ENCODE measurements at regions of chr22 and their contacts with region 1.

Region 1: GRCh38 chr22:32144496-32145274 is 14.4 kb downstream of the C22orf42 start:
- DNase-seq: peak; percentile 37
- H3K4me3 Mint-ChIP-seq: no peak overlapping the region
- H3K27ac Mint-ChIP-seq: no peak overlapping the region
- H3K4me1 Mint-ChIP-seq: peaks cover 37% of the 10 kb centered on the region
- H3K27me3 Mint-ChIP-seq: no peaks in the 10 kb centered on the region

Region 2: DNA sequence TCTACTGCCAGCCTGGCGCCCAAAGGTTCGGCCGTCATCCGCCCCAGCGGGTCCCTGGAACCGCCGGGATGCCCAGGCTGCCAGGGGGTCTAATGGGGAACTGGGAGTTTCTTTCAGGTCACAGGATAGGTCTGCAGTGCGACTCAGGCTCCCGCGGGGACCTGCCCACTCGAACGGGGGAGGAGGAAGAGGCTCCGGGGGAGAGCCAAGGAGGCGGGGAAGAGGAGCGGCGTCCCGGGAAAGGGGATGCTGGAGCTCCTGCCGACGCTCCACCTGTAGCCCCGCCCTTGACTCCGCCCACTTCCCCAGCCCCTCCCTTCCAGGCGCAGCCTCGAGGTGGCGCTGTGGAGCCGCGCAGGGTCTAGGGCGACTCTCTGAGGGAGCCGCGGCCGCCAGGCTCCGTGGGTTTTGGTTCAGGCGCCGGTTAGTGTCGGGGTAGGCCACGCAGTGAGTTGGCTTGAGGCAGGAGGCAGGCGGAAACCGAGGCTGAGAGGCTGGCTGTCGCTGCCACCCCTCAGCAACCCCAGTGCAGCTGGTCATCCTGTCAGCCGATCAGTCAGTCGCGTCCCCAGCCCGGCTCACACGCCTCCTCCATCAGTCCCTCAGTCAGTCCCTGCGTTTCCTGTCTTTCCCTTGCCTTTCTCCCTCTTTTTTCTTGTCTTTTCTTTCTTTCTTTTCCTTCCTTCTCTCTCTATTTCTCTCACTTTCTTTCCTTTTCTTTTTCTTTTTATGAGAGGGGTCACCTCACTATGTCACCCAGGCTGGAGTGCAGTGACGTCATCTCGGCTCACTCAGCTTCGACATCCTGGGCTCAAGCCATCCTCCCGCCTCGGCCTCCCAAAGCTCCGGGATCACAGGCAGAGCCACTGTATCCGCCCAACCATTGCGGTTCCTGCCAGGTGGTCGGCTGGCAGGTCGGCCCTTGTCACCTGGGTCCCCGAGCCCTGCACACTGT is 173.9 kb before region 1 on chr22:
- CTCF ChIA-PET with region 1: no interaction called
- intact Hi-C with region 1: loop called (anchors 5 kb)
- DNase-seq: peak; percentile 90
- H3K4me3 Mint-ChIP-seq: peak overlapping the region; percentile 68
- H3K27ac Mint-ChIP-seq: no peak overlapping the region
- H3K4me1 Mint-ChIP-seq: peaks cover 11% of the 10 kb centered on the region
- H3K27me3 Mint-ChIP-seq: no peaks in the 10 kb centered on the region

Region 3: GRCh38 chr22:32050678-32051515 is 93.8 kb before region 1 on chr22:
- CTCF ChIA-PET with region 1: no interaction called
- intact Hi-C with region 1: loop called (anchors 2 kb)
- DNase-seq: peak; percentile 91
- H3K4me3 Mint-ChIP-seq: no peak overlapping the region
- H3K27ac Mint-ChIP-seq: peak overlapping the region; percentile 47
- H3K4me1 Mint-ChIP-seq: peaks cover 16% of the 10 kb centered on the region
- H3K27me3 Mint-ChIP-seq: peaks cover 29% of the 10 kb centered on the region

Region 4: GRCh38 chr22:32202539-32203180 is 58.0 kb after region 1 on chr22:
- CTCF ChIA-PET with region 1: no interaction called
- intact Hi-C with region 1: loop called (anchors 2 kb)
- DNase-seq: peak; percentile 53
- H3K4me3 Mint-ChIP-seq: peak overlapping the region; percentile 66
- H3K27ac Mint-ChIP-seq: no peak overlapping the region
- H3K4me1 Mint-ChIP-seq: peaks cover 34% of the 10 kb centered on the region
- H3K27me3 Mint-ChIP-seq: peaks cover 17% of the 10 kb centered on the region

Region 5: GRCh38 chr22:32265882-32266767 is 121.4 kb after region 1 on chr22:
- CTCF ChIA-PET with region 1: interaction called, 3 read pairs
- intact Hi-C with region 1: loop called (anchors 10 kb)
- DNase-seq: peak; percentile 84
- H3K4me3 Mint-ChIP-seq: no peak overlapping the region
- H3K27ac Mint-ChIP-seq: no peak overlapping the region
- H3K4me1 Mint-ChIP-seq: peaks cover 8% of the 10 kb centered on the region
- H3K27me3 Mint-ChIP-seq: no peaks in the 10 kb centered on the region

Region 6: GRCh38 chr22:32411829-32412592 is 267.3 kb after region 1 on chr22 and contains the start of gene RTCB:
- CTCF ChIA-PET with region 1: no interaction called
- intact Hi-C with region 1: loop called (anchors 1 kb)
- DNase-seq: peak; percentile 96
- H3K4me3 Mint-ChIP-seq: peak within 1 kb of the TSS; percentile 91
- H3K27ac Mint-ChIP-seq: peak within 1 kb of the TSS; percentile 94
- H3K4me1 Mint-ChIP-seq: peaks cover 48% of the 10 kb centered on the region
- H3K27me3 Mint-ChIP-seq: no peaks in the 10 kb centered on the region
- total RNA-seq, gene RTCB: 84.2 to 85.5 TPM

Region 7: DNA sequence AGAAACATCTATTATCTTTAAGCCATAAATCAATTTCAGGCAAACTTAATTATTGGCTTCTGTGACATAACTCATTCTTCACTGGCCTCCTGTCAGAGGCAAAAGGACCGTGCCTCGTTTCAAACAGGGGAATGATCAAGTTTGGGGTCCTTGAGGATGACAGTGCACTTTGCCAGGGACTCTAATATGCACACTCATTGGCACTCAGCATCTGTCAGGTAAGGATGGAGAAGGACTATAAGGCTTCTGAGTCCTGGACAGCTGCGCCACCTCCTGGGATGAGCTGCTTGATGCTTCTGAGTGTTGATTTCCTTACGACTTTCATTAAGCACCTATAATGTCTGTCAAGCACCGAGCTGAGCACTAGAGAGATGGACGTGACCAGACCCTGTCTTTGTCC is 299.4 kb after region 1 on chr22:
- CTCF ChIA-PET with region 1: no interaction called
- intact Hi-C with region 1: no loop called
- DNase-seq: peak; percentile 35
- H3K4me3 Mint-ChIP-seq: no peak overlapping the region
- H3K27ac Mint-ChIP-seq: no peak overlapping the region
- H3K4me1 Mint-ChIP-seq: no peaks in the 10 kb centered on the region
- H3K27me3 Mint-ChIP-seq: no peaks in the 10 kb centered on the region

Region 8: DNA sequence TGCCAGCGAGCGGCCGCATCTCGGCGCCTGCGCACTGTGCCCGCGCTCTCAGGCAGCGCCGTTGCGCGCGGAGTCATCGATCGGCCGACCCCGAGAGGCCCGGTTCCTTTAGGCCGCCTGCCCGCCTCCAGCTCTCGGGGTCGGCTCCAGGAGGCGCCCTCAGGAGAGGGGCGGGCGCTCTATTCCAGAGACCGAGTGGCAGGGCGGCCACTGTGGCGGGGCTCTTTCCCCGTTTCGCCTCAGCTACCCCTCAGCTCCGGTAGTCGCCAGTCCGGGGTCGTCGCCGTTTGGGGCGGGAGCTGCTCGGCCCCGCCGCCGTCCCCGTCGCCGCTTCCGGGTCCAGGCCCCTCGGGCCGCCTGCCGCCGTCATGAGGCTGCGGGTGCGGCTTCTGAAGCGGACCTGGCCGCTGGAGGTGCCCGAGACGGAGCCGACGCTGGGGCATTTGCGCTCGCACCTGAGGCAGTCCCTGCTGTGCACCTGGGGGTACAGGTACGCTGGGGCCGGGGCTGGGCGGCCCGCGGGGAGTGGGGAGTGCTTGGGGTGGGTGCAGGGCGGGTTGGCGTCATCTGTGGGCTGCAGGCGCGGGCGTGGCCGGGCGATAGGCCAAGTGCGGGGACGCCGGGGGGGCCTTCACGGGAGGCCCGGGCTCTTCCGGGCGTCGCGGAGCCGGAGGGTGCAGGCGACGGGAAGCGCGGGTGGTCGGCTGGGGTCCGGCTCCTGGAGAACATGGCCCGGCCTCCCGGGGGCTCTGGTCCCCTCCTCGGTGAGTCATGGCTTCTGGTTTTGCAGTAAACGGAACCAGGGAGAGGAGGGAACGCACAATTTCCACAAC is 330.2 kb after region 1 on chr22 and contains the start of gene FBXO7:
- CTCF ChIA-PET with region 1: interaction called, 5 read pairs
- intact Hi-C with region 1: loop called (anchors 2 kb)
- DNase-seq: peak; percentile 86
- H3K4me3 Mint-ChIP-seq: peak within 1 kb of the TSS; percentile 92
- H3K27ac Mint-ChIP-seq: peak within 1 kb of the TSS; percentile 93
- H3K4me1 Mint-ChIP-seq: peaks cover 17% of the 10 kb centered on the region
- H3K27me3 Mint-ChIP-seq: no peaks in the 10 kb centered on the region
- total RNA-seq, gene FBXO7: 62.5 to 65.9 TPM

Measured in activated naive CD4-positive, alpha-beta T cell treated with anti-CD3 and anti-CD28 coated beads for 36 hours (primary cell).